Transverse colon (tissue), 4 donors: ENCODE measurements at regions of chr9 and their contacts with region 1.

Region 1: GRCh38 chr9:136118320-136119060 is at the start of gene TMEM250:
- DNase-seq: peak; percentile 97
- H3K4me3 ChIP-seq: peak within 1 kb of the TSS; percentile 65 to 93 (median 90)
- H3K27ac ChIP-seq: peak within 1 kb of the TSS; percentile 94 to 98 (median 97)
- H3K4me1 ChIP-seq: peaks cover 14 to 34% (median 29%) of the 10 kb centered on the region in 4 donors
- H3K27me3 ChIP-seq: peaks cover 3% of the 10 kb centered on the region
- CTCF ChIP-seq: peak in 1 of 5 experiments; percentile 3
- EP300 ChIP-seq: peak; percentile 19
- POLR2A ChIP-seq: no peak
- total RNA-seq, gene TMEM250: 50.3 to 187 (median 86.6) TPM

Region 2: DNA sequence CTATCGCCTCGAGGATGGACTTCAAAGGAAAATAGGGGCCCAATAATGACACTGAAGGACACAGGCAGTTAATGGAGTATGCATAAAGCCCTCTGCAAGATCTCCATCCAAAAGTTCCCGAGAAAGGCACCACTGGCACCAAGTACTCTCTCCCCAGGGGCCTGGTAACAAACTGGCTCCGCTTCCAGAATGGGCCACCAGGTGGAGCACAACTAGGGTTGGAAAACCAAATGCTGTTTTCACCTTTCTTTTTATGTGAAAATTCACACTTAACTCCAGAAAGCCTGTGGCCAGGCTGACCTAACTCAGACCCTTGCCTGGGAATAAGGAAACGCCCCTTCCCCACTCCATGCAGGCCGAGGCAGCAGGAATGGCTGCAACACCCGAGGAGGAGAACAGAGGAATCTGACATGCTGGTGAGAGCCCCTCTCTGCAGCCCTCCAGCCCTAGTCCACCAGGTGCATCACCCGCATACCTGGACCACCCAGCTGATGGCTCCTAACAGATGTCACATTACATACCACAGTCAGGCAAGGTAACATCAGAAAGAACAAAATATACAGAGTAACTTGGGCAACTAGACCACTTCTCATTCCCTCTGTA is 253.9 kb before region 1 on chr9:
- in situ Hi-C with region 1: loop called in 2 of 4 experiments (anchors 10 to 25 kb)
- intact Hi-C with region 1: loop called (anchors 5 kb)
- DNase-seq: peak; percentile 59
- H3K4me3 ChIP-seq: no peak overlapping the region
- H3K27ac ChIP-seq: no peak overlapping the region
- H3K4me1 ChIP-seq: peaks cover 0 to 6% (median 0%) of the 10 kb centered on the region in 4 donors
- H3K27me3 ChIP-seq: no peaks in the 10 kb centered on the region
- CTCF ChIP-seq: peak; percentile 62 to 87 (median 86)
- EP300 ChIP-seq: no peak
- POLR2A ChIP-seq: no peak

Region 3: DNA sequence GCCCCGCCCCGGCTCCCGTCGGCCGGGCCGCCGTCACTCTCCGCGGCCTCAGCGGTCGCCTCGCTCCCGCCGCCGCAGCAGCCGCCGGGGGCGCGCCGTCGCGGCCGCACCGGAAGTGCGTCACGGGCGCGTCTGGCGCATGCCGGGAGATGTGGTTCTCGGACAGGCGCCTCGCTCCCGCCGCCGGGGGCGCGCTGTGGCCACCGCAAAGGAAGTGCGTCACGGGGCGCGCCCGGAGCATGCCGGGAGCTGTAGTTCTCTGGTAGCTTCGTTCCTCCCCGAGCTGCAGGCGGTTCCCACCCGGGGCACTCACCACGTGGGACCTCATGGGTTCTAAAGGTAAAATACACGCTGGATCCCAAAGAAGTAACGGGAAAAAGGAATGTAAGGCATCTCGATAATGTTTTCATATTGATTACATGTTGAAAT is 157.2 kb before region 1 on chr9 and contains the start of gene UBAC1:
- in situ Hi-C with region 1: loop called (anchors 5 to 10 kb)
- intact Hi-C with region 1: no loop called
- DNase-seq: peak; percentile 97
- H3K4me3 ChIP-seq: peak within 1 kb of the TSS; percentile 86 to 98 (median 92)
- H3K27ac ChIP-seq: peak within 1 kb of the TSS; percentile 93 to 97 (median 94)
- H3K4me1 ChIP-seq: peaks cover 9 to 19% (median 14%) of the 10 kb centered on the region in 4 donors
- H3K27me3 ChIP-seq: no peaks in the 10 kb centered on the region
- CTCF ChIP-seq: peak in 4 of 5 experiments; percentile 37 to 62 (median 46)
- EP300 ChIP-seq: no peak
- POLR2A ChIP-seq: no peak
- total RNA-seq, gene UBAC1: 42.6 to 91.9 (median 62.9) TPM

Region 4: GRCh38 chr9:135969064-135969683 is 149.3 kb before region 1 on chr9:
- in situ Hi-C with region 1: loop called (anchors 5 to 10 kb)
- intact Hi-C with region 1: loop called (anchors 2 kb)
- DNase-seq: no peak
- H3K4me3 ChIP-seq: no peak overlapping the region
- H3K27ac ChIP-seq: no peak overlapping the region
- H3K4me1 ChIP-seq: peaks cover 0 to 4% (median 1%) of the 10 kb centered on the region in 4 donors
- H3K27me3 ChIP-seq: no peaks in the 10 kb centered on the region
- CTCF ChIP-seq: no peak
- EP300 ChIP-seq: no peak
- POLR2A ChIP-seq: no peak

Region 5: DNA sequence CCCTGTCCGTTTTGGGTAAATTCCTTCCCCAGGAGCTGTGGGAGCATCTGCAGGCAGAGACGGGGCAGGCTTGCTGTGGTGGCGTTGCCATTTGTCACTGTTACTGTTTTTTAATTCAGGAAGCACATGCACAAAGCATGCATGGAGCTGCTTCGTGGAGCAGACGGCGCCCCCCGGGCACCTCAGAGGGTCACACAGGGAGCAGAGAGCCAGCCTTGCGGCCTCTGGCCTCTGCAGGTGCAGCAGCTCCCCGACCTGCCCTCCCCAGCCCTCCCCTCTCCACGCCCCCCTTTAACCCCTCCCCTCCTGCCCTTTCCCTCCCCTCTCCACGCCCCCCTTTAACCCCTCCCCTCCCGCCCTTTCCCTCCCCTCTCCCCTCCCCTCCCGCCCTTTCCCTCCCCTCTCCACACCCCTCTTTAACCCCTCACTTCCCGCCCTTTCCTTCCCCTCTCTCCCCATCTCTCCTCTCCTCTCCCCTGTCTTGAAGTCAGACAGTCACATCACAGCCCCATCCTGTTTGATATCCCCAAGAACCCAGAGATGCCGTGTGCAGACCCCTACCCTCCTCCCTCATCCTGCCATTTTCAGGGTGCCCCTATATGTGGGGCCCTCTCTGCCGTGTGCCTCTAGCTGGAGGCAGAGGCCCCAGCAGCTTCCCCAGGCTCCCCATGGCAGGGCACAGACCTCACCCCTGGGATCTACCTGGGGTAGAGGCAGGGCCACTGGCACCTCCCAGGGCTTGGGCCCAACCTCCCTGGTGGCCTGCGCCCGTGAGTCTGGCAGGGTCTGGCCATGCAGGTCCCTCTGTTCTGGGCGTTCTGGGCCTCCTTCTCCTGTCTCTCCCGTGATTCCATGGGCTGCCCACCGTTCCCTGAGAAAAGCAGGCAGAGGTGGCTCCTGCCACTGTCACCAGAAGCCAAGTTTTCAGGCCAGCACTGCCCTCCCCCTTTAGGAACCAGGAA is 127.7 kb before region 1 on chr9:
- in situ Hi-C with region 1: no loop called
- intact Hi-C with region 1: loop called (anchors 1 kb)
- DNase-seq: peak; percentile 41
- H3K4me3 ChIP-seq: no peak overlapping the region
- H3K27ac ChIP-seq: peak overlapping the region; percentile 20 to 55 (median 28)
- H3K4me1 ChIP-seq: peaks cover 22 to 37% (median 27%) of the 10 kb centered on the region in 4 donors
- H3K27me3 ChIP-seq: peaks cover 31% of the 10 kb centered on the region
- CTCF ChIP-seq: no peak
- EP300 ChIP-seq: no peak
- POLR2A ChIP-seq: no peak